AG04449 (cell line): ENCODE measurements at regions of chr9 and their contacts with region 1.

Region 1: DNA sequence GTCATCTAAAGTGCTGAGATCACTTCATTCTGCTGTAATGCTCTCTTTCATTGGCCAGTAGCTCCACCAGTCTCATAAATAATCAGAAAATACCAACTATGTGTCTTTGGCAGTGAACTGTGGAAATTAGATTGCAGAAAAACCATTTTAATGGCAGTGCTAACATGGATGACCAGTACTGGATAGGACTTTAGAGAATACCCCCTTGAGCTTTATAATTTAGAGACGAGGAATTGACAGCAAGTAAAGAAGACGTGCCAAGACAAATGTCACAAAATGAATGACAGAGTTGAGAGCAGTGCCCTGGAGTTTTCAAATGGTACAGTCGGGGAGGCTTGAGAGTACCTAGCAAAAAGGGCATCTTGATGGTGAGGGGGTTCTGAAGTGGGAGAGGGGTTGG is 5.8 kb downstream of the MSANTD3 start:
- DNase-seq: no peak
- H3K4me3 ChIP-seq: no peak overlapping the region
- CTCF ChIP-seq: no peak

Region 2: DNA sequence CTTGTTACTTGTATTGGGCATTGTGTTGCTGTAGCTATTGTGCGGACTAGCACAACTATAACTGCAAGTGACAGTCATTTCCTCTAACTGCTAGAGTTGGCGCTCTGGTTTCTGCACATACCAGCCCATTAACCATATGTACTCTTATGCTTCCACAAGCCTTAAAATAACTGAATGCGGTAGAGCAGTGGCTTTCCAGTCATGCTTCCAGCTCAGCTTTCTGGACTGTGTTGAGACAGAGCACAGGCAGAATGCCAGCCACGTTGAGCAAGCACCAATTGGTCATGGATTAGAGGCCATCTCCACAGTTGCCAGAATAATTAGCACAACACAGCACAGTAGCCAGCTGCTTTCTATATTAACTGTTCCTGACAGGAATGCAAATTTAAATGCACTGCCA is 321.5 kb before region 1 on chr9:
- CTCF ChIA-PET with region 1: no interaction called
- POLR2A ChIA-PET with region 1: no interaction called
- DNase-seq: peak; percentile 94
- H3K4me3 ChIP-seq: no peak overlapping the region
- CTCF ChIP-seq: no peak

Region 3: GRCh38 chr9:100309992-100310391 is 122.7 kb before region 1 on chr9:
- CTCF ChIA-PET with region 1: no interaction called
- POLR2A ChIA-PET with region 1: no interaction called
- DNase-seq: no peak
- H3K4me3 ChIP-seq: no peak overlapping the region
- CTCF ChIP-seq: no peak

Region 4: DNA sequence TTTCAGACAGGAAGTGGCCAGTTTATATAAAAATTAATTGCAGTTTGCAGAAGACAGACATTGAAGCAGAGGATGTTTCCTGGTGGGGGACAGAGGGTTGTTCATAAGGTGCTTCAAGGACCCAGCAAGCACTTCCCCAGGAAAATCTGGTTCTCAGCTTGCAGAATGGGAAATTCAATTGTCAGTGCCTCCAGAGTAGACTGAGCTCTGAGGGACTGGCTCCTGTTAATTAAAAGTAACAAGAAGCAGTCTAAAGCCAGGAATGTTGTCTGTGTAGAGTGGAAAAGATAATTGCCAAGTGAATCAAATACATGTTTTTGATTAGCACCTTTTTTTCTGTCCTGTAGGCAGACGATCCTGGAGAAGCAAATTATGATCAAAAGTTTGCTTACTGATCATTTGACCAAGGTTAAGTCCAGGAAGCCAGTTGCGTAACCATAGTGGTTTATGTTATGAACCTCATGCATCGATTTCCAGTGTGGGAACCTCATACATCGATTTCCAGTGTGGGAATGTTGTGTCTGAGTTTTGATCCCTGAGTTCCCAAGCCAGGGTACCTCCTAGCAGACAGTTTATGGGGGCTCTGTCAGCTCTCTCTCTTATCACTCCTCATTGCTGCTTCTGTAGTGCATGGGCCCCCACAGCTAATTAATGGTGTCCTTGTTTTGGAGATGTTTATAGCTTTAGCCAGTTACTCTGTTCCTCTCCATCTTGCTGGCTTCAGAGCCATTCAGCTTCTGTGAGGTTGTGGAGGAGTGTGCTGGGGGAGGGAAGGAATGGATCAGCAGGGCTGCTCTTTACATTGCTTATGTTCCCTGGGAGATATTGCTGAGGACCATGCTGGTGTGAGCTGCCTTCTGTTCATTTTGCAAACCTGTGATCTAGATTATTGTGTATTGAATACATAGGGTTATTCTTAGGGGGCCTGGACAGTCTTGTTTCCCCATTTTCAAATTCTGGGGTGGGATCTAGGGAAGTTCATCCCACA is 11.3 kb after region 1 on chr9:
- CTCF ChIA-PET with region 1: interaction called, 25 read pairs
- POLR2A ChIA-PET with region 1: no interaction called
- DNase-seq: no peak
- H3K4me3 ChIP-seq: no peak overlapping the region
- CTCF ChIP-seq: no peak